ENCODE measurements at regions of chr16 and their contacts with region 1.

Region 1: GRCh38 chr16:10817963-10818941 is at the start of gene TVP23A:
- DNase-seq: peak in 1 of 2 donors; percentile 20
- ATAC-seq: peak in 2 of 8 donors; percentile 28 to 39
- H3K4me3 ChIP-seq: peak within 1 kb of the TSS in 9 of 10 donors; percentile 27 to 46 (median 36)
- H3K27ac ChIP-seq: no peak within 1 kb of the TSS
- H3K4me1 ChIP-seq: peaks cover 0 to 12% (median 0%) of the 10 kb centered on the region in 9 donors
- H3K27me3 ChIP-seq: peaks cover 0 to 11% (median 0%) of the 10 kb centered on the region in 7 donors
- CTCF ChIP-seq: no peak
- total RNA-seq, gene TVP23A: 0.13 to 0.44 (median 0.23) TPM in 5 of 10 donors, not detected in the others

Region 2: DNA sequence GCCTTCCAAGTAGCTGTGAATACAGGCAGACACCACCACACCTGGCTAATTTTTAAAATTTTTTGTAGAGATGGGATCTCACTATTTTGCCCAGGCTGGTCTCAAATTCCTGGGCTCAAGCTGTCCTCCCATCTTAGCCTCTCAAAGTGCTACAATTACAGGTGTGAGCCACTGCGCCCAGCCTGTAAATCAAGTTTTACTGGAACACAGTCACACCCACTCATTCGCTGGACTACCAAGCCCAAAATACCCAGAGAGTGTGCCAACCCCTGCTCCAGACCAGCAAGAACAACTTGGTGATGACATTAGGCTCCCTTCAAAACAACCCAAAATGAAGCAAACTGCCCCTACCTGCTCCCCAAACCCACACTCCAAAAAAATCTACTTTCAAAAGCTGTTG is 35.6 kb before region 1 on chr16:
- intact Hi-C with region 1: loop called in 1 of 10 experiments (anchors 5 kb)
- DNase-seq: no peak
- ATAC-seq: no peak
- H3K4me3 ChIP-seq: no peak overlapping the region
- H3K27ac ChIP-seq: no peak overlapping the region
- H3K4me1 ChIP-seq: no peaks in the 10 kb centered on the region
- H3K27me3 ChIP-seq: no peaks in the 10 kb centered on the region
- CTCF ChIP-seq: no peak